ENCODE measurements at regions of chr11 and their contacts with region 1.

Region 1: DNA sequence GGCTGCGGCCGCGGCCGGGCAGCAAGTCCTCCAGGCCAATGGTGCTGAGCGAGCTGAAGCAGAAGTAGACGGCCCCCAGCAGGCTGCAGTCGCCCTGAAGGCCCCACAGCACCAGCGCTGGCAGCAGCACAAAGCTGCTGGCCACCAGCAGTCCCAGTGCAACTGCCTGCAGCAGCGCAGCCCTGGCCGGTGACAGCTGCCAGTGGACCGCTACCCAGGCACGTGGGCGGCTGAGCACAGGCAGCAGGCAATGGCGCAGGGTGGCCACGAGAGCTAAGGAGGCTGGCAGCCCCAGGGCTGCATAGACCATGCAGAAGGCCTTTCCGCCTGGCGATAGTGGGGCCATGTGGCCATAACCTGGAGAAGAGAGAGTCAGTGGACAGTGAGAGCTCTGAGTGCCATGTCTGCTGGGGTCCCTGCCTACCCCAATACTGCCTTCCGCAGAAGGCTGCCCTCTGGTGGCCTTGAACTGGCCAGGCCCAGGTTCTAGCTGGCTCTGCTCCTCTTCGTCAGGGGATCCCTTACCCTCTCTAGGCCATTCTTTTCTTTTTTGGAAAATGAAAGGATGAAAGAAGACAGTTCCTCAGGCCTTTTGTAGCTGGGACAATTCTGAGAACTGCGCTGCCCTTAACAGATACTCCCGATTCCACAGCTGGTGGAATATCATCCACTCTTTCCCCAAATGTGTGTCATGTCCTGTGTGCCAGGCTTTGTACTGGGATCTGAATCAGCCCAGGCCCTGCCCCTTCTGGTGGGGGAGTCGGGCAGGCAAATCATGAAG is 1.9 kb downstream of the KCNK7 start:
- DNase-seq: peak; percentile 80
- ATAC-seq: peak; percentile 49
- H3K4me3 Mint-ChIP-seq: peak overlapping the region; percentile 65
- H3K27ac Mint-ChIP-seq: no peak overlapping the region
- H3K4me1 Mint-ChIP-seq: peaks cover 19% of the 10 kb centered on the region
- H3K27me3 Mint-ChIP-seq: peaks cover 49% of the 10 kb centered on the region
- CTCF ChIP-seq: peak; percentile 52

Region 2: GRCh38 chr11:65546217-65546958 is 47.3 kb before region 1 on chr11:
- CTCF ChIA-PET with region 1: interaction called, 271 read pairs
- POLR2A ChIA-PET with region 1: interaction called, 4 read pairs
- DNase-seq: peak; percentile 99
- ATAC-seq: peak; percentile 78
- H3K4me3 Mint-ChIP-seq: peak overlapping the region; percentile 66
- H3K27ac Mint-ChIP-seq: no peak overlapping the region
- H3K4me1 Mint-ChIP-seq: peaks cover 18% of the 10 kb centered on the region
- H3K27me3 Mint-ChIP-seq: peaks cover 95% of the 10 kb centered on the region
- CTCF ChIP-seq: no peak

Region 3: DNA sequence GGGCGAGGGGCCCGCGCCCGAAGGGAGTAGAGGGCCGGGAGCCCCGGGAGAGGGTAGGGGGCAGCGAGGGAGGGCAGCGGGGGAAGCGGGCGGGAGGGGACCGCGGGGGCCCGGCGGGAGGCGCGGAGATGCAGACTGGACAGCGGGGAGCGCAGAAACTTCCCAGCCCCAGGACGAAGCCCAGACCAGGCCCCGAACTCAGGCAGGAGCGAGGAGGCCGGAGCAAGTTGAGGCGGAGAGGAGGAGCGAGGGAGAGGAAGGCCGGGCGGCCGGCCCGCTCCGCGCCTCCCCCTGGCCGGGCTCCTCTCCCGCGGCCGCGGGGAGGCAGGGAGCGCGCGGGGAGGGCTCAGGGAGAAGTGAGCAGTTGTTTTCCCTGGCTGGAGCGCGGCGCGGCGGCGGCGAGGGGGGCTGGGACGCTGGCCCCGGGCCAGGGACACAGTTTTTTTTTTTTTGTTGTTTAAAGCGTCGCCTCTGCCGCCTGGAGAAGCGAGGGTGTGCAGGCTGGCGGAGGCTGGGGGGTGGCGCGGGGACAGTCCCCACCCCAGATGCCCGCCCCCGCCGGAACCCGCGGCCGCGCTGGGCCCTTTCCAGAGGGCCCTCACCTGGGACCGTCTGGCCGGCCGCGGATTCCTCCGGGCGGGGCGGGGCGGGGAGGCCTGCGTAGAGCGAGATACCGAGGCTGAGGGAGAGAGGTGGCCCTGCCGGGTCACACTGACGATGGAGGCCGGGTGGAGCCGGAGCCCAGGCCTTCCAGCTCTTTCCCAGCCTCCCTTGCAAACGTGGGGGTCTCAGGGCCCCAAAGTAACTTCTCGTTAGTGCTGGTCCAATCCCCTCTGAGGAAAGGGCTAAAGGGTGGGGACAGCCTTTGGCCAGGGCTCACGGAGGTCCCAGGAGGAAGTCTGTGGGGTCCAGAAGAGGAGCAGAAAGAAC is 35.4 kb before region 1 on chr11 and contains the start of gene LTBP3:
- CTCF ChIA-PET with region 1: interaction called, 67 read pairs
- POLR2A ChIA-PET with region 1: interaction called, 3 read pairs
- DNase-seq: peak; percentile 60
- ATAC-seq: peak; percentile 32
- H3K4me3 Mint-ChIP-seq: peak within 1 kb of the TSS; percentile 69
- H3K27ac Mint-ChIP-seq: peak within 1 kb of the TSS; percentile 33; the same call in 1 of the 2 replicates
- H3K4me1 Mint-ChIP-seq: peaks cover 50% of the 10 kb centered on the region
- H3K27me3 Mint-ChIP-seq: peaks cover 62% of the 10 kb centered on the region
- CTCF ChIP-seq: no peak
- total RNA-seq, gene LTBP3: 15.9 to 23.6 TPM (median 20.7 TPM) in 3 replicates

Region 4: DNA sequence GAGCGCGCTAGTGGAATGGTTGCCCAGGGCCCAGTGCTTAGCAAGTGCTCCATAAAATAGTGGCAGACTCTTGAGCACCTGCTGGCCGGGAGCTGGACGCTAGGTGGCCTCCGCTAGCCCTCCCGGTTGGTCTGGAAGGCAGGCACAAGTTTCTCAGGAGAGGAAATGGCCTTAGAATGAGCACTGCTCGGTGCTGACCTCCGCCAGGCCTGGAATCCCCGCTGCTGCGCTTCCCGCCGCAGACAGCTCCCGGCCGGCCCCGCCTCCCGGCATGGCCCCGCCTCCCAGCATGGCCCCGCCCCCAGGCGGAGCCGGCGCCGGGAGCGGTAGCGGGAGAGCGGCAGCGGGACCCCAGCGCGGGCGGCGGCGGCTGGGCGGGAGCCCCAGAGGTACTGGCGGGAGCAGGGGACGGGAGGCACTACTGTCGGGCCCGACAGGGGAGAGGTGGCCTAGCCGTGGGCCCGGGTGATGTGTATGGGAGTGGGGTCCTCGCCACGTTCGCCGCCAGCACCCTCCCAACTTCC is 44.1 kb after region 1 on chr11 and contains the start of gene SIPA1:
- CTCF ChIA-PET with region 1: interaction called, 34 read pairs
- POLR2A ChIA-PET with region 1: interaction called, 8 read pairs
- DNase-seq: peak; percentile 89
- ATAC-seq: peak; percentile 70
- H3K4me3 Mint-ChIP-seq: peak within 1 kb of the TSS; percentile 81
- H3K27ac Mint-ChIP-seq: peak within 1 kb of the TSS; percentile 94
- H3K4me1 Mint-ChIP-seq: peaks cover 22% of the 10 kb centered on the region
- H3K27me3 Mint-ChIP-seq: no peaks in the 10 kb centered on the region
- CTCF ChIP-seq: no peak
- total RNA-seq, gene SIPA1: 63.3 to 71.7 TPM (median 65.4 TPM) in 3 replicates